Posterior vena cava (tissue), 2 donors: ENCODE measurements at regions of chr15 and their contacts with region 1.

Region 1: DNA sequence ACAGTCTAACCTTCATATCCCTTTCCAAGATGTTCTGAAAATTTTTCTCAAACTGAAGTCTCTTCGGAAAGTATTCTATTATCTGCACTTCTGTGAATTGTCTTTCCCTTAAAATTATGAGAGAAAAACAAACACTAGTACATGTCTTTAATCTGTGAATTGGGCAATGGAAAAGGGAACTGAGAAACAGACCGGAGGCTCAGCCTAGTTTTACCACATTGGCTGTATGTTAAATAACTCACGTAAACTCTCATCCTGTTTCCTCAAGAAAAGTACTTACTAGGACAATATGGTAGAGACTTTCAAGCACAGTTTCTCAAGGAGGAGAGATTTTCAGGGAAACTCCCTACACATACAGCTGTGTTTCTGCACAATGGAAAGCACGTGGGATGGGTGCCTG is 982.2 kb upstream of the SEMA6D start:
- DNase-seq: no peak

Region 2: GRCh38 chr15:47534673-47535072 is 799.6 kb after region 1 on chr15:
- intact Hi-C with region 1: loop called in 1 of 2 experiments (anchors 5 kb)
- DNase-seq: no peak